Endothelial cell of umbilical vein (primary cell): ENCODE measurements at regions of chr15 and their contacts with region 1.

Region 1: DNA sequence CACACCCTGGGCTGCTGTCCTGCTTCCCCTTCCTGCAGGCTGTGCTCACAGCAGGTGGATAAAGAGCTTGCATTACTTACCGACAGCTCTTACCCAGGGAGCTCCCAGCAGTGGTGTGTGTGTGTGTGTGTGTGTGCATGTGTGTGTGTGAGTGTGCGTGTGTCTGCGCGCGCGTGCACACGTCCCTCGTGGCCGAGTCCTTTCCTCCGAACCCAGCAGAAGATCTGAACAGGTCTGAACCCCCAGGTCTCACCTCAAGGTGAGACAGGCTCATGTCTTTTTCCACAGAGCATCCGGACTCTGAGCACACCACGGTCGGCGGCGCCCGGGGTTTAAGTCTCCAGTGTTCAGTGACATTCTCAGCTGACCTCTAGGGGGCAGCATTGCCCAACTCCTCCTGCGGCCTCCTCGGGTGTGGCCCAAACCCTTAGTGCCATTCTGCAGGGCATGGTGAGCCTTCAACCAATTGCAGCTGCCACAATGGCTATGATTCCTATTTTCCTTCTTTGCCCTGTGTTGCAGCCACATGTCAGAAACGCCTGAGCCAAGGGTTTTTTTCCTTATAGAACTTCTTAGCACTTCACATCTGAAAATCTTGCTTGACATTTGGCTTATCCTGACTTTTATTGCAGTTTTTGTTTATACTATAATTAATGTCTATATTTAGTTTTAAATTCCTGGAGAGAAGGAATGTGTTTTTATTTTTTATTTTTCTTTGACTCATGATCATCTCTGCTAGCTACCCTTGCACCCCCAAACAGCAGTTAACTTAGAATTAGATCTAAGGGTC is 64.1 kb upstream of the KLHL25 start:
- DNase-seq: peak; percentile 45
- H3K4me3 ChIP-seq: no peak overlapping the region
- H3K27ac ChIP-seq: no peak overlapping the region
- H3K4me1 ChIP-seq: no peaks in the 10 kb centered on the region
- H3K27me3 ChIP-seq: peaks cover 3 to 5% of the 10 kb centered on the region in 2 experiments
- CTCF ChIP-seq: peak; percentile 80 to 84
- POLR2A ChIP-seq: no peak

Region 2: GRCh38 chr15:85412956-85413854 is 445.6 kb before region 1 on chr15:
- CTCF ChIA-PET with region 1: no interaction called
- POLR2A ChIA-PET with region 1: no interaction called
- dilution Hi-C with region 1: no loop called
- intact Hi-C with region 1: no loop called
- DNase-seq: peak; percentile 98
- H3K4me3 ChIP-seq: no peak overlapping the region
- H3K27ac ChIP-seq: peak overlapping the region; percentile 77
- H3K4me1 ChIP-seq: peaks cover 38% of the 10 kb centered on the region
- H3K27me3 ChIP-seq: no peaks in the 10 kb centered on the region
- CTCF ChIP-seq: no peak
- POLR2A ChIP-seq: no peak

Region 3: DNA sequence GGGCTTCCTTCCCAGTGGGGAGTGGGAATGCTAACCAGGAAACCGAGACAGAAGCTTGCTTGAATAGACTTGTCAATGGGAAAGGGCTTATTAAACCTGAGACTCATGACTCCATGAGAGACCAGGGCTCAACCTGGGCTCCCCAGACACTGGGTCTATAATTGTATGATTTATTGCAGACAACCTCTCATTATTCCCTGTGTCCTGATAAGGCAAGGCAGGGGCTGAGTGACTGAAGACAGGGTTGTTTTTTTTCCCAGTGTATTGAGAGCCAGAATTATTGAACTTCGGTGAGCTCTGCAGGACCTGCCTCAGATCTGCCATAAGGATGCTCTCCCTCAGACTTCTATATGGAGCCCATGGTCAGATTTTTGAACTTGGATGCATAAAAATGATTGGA is 15.5 kb after region 1 on chr15:
- CTCF ChIA-PET with region 1: interaction called, 10 read pairs
- POLR2A ChIA-PET with region 1: no interaction called
- dilution Hi-C with region 1: no loop called
- intact Hi-C with region 1: no loop called
- DNase-seq: no peak
- H3K4me3 ChIP-seq: no peak overlapping the region
- H3K27ac ChIP-seq: no peak overlapping the region
- H3K4me1 ChIP-seq: no peaks in the 10 kb centered on the region
- H3K27me3 ChIP-seq: peaks cover 0 to 3% of the 10 kb centered on the region in 2 experiments
- CTCF ChIP-seq: no peak
- POLR2A ChIP-seq: no peak

Region 4: DNA sequence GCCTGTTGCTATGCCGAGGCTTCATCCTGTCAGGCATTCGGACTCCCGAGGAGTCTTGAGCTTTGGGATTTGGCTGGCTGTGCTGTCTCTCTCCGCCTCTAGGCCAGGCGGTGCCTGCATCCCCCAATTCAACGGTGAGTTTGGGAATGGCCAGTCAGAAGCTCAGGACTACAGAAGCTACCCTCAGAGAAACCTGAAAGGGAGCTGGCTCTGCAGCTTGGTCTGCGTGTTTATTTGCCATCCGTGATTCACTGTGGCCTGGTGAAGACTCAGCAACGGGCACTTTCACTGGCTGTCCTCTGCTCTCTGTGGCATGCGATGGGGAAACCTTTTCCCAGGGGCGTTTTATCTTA is 39.1 kb after region 1 on chr15:
- CTCF ChIA-PET with region 1: no interaction called
- POLR2A ChIA-PET with region 1: no interaction called
- dilution Hi-C with region 1: no loop called
- intact Hi-C with region 1: no loop called
- DNase-seq: no peak
- H3K4me3 ChIP-seq: no peak overlapping the region
- H3K27ac ChIP-seq: no peak overlapping the region
- H3K4me1 ChIP-seq: no peaks in the 10 kb centered on the region
- H3K27me3 ChIP-seq: no peaks in the 10 kb centered on the region
- CTCF ChIP-seq: no peak
- POLR2A ChIP-seq: no peak

Region 5: DNA sequence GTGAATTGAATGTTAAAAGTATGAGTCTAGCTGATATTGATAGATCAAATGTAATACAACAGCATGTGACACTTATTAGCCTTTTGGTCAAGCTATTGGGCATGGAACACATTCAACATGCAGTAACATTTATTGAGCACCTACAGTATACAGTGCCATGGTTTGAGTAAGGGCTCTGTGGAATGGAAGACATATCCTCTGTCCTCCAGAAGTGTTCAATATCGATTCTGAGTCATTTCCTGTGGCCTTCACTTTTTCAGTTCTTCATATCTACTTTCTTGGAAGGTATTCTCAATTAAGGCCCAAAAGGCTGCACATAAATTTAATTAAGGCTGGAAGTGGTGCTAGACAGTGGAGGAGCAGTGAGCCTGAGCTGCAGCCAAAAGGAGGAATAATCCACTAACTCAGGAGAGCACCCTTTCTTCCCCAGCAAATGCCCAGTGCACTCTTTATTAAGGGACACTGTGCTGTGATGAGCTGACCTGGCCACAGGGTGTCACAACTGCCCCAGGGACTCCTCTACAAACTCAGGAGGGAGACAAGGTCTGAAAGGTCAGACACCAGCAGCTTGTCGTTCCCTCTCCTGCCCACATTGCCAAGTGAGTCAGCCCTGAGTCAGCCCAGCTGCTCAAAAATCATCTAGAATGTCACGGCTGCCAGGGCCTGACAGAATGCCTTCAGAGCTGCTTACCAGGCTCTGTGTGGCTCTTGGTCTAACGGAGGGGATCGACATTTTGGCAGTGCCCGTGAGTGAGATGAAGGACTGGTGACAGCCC is 765.7 kb after region 1 on chr15:
- CTCF ChIA-PET with region 1: no interaction called
- POLR2A ChIA-PET with region 1: no interaction called
- dilution Hi-C with region 1: no loop called
- intact Hi-C with region 1: loop called (anchors 5 kb)
- DNase-seq: peak; percentile 4
- H3K4me3 ChIP-seq: no peak overlapping the region
- H3K27ac ChIP-seq: no peak overlapping the region
- H3K4me1 ChIP-seq: peaks cover 5% of the 10 kb centered on the region
- H3K27me3 ChIP-seq: no peaks in the 10 kb centered on the region
- CTCF ChIP-seq: peak in 1 of 2 donors; percentile 37
- POLR2A ChIP-seq: no peak